Right ventricle myocardium superior (tissue), 1 donor: ENCODE measurements at regions of chr17 and their contacts with region 1.

Region 1: GRCh38 chr17:38415250-38416194 is 12.7 kb upstream of the ARHGAP23 start:
- DNase-seq: no peak
- ATAC-seq: peak; percentile 37

Region 2: DNA sequence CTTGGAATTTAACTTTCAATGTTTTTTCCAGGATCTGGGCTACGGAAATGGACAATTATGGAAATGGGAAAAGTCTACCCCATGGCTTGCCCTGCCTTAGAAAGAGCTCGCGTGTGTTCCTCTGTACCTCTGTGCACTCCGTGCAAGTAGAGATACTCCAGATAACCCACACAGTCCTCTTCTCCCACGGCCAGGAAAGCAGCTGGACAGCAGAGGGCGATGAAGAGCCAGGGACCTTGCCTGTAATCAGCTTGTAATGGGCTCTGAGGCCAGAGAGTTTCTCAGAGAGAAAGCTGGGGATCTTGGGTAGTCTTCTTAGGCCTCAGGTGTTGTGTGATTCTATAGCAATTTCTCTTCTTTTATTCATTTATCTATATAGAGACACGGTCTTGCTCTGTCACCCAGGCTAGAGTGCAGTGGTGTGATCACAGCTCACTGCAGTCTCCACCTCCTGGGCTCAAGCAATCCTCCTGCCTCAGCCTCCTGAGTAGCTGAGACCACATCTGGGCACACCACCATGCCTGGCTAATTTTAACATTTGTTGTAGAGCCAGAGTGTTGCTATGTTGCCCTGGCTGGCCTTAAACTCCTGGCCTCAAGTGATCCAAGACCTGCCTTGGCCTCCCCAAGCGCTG is 66.3 kb before region 1 on chr17:
- intact Hi-C with region 1: loop called (anchors 1 kb)
- DNase-seq: peak; percentile 88
- ATAC-seq: peak; percentile 62